ENCODE measurements at regions of chr20 and their contacts with region 1.

Region 1: DNA sequence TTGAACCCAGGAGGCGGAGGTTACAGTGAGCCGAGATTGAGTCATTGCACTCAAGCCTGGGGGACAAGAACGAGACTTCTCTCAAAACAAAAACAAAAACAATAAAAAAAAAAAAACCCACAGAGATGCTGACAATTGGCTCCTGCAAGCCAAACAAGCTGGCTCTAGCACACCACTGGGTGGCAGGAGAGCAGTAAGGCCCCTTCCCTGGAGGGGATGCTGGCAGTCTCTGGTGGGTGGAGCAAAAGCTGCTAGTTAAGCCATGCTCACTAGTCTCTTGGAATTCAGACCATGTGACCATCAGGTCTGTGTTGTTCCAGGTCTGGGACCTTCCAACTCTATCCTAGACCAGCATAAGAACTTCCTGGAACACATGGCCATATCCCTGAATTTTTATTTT is 18.9 kb upstream of the DSN1 start:
- DNase-seq: peak in 4 of 5 donors; percentile 41 to 66 (median 65)
- ATAC-seq: peak; percentile 37 to 72 (median 66)
- H3K4me3 ChIP-seq: no peak overlapping the region
- H3K27ac ChIP-seq: no peak overlapping the region
- H3K4me1 ChIP-seq: peaks cover 0 to 17% (median 2%) of the 10 kb centered on the region in 12 donors
- H3K27me3 ChIP-seq: no peaks in the 10 kb centered on the region
- CTCF ChIP-seq: peak in 11 of 12 donors; percentile 7 to 59 (median 44)
- POLR2A ChIP-seq: no peak

Region 2: DNA sequence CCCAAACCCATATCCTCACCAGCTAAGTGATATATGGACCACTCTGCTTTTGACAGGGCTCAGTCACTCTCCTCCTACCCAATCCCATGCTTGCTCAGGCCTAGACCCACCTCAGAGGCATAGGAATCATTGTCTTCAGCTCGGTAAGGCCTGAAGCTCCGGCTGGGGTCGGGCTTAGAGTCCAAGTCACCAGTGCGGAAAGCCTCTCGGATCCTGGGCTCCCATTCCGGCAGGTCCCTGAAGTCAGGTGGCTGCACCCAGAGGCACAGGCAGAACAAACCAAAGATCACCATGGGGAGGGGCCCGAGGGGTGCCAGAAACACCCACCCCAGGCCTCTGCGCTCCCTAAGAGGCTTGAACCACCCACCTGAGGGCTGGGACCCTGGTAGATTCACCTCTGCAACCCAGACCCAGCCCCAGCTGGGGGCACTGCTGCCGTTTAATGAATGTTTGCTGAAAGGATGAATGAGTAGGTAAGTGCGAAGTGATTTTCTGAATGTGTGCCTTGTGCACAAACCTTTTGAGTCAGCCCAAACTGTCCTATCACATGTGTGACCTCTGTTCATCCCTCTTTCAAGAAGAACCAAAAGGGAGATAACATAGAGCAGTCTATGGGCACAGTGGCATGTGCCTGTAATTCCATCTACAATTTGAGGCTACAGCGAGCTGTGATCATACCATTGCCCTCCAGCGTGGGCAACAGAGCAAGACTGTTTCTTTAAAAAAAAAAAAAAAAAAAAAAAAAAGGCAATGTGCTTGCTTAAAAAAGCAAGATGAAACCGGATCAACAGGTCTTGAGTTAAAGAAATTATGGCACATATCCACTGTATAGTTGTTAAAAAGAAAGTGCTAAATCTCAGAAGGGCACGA is 20.4 kb after region 1 on chr20:
- intact Hi-C with region 1: no loop called
- DNase-seq: no peak
- ATAC-seq: no peak
- H3K4me3 ChIP-seq: no peak overlapping the region
- H3K27ac ChIP-seq: peak overlapping the region in 1 of 12 donors; percentile 0
- H3K4me1 ChIP-seq: peaks cover 0 to 14% (median 0%) of the 10 kb centered on the region in 12 donors
- H3K27me3 ChIP-seq: no peaks in the 10 kb centered on the region
- CTCF ChIP-seq: no peak
- POLR2A ChIP-seq: no peak

Region 3: GRCh38 chr20:36827474-36827873 is 35.1 kb after region 1 on chr20:
- intact Hi-C with region 1: loop called in 1 of 10 experiments (anchors 5 kb)
- DNase-seq: no peak
- ATAC-seq: no peak
- H3K4me3 ChIP-seq: no peak overlapping the region
- H3K27ac ChIP-seq: peak overlapping the region in 8 of 12 donors; percentile 41 to 91 (median 72)
- H3K4me1 ChIP-seq: peaks cover 11 to 65% (median 44%) of the 10 kb centered on the region in 12 donors
- H3K27me3 ChIP-seq: no peaks in the 10 kb centered on the region
- CTCF ChIP-seq: no peak
- POLR2A ChIP-seq: no peak

Region 4: GRCh38 chr20:36881888-36882287 is 89.5 kb after region 1 on chr20:
- intact Hi-C with region 1: loop called in 3 of 10 experiments (anchors 2 to 5 kb)
- DNase-seq: no peak
- ATAC-seq: no peak
- H3K4me3 ChIP-seq: no peak overlapping the region
- H3K27ac ChIP-seq: no peak overlapping the region
- H3K4me1 ChIP-seq: peaks cover 0 to 14% (median 1%) of the 10 kb centered on the region in 12 donors
- H3K27me3 ChIP-seq: no peaks in the 10 kb centered on the region
- CTCF ChIP-seq: no peak
- POLR2A ChIP-seq: no peak